ENCODE measurements at regions of chr1 and their contacts with region 1.

Region 1: GRCh38 chr1:85584264-85584781 is 3.8 kb downstream of the CCN1 start:
- DNase-seq: peak; percentile 63
- ATAC-seq: no peak
- H3K4me3 ChIP-seq: no peak overlapping the region
- H3K27ac ChIP-seq: no peak overlapping the region
- H3K4me1 ChIP-seq: peaks cover 52% of the 10 kb centered on the region
- H3K27me3 ChIP-seq: peaks cover 0 to 3% of the 10 kb centered on the region in 2 experiments; a peak in 1 of 5 replicates
- CTCF ChIP-seq: no peak
- EP300 ChIP-seq: no peak; a peak in 1 of 4 replicates
- POLR2A ChIP-seq: peak in 1 of 2 experiments; percentile 83; a peak in 2 of 4 replicates
- RAD21 ChIP-seq: no peak

Region 2: DNA sequence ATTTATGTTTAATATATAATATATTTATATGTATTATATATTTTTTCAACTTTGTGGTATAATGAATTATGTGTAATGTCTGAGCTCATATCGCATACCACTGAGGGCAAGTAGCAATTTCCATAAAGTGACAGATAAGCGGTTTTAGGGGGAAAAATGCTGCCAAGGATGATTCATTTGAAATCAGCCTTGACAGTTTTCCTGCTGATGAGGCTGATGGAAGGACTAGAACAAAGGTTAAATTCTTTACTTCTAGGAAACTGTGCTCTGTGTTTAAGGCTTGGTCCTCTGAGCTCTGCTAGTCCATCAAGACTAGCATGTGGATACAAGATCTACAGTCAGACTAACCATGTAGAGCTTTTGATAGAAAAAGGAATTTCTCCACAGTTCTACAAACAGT is 100.1 kb before region 1 on chr1:
- CTCF ChIA-PET with region 1: no interaction called
- POLR2A ChIA-PET with region 1: no interaction called
- in situ Hi-C with region 1: no loop called
- intact Hi-C with region 1: no loop called
- DNase-seq: no peak
- ATAC-seq: no peak
- H3K4me3 ChIP-seq: no peak overlapping the region
- H3K27ac ChIP-seq: no peak overlapping the region
- H3K4me1 ChIP-seq: no peaks in the 10 kb centered on the region
- H3K27me3 ChIP-seq: no peaks in the 10 kb centered on the region
- CTCF ChIP-seq: no peak
- EP300 ChIP-seq: no peak
- POLR2A ChIP-seq: no peak
- RAD21 ChIP-seq: no peak

Region 3: GRCh38 chr1:85628791-85629531 is 44.6 kb after region 1 on chr1:
- CTCF ChIA-PET with region 1: no interaction called
- POLR2A ChIA-PET with region 1: interaction called, 29 read pairs
- in situ Hi-C with region 1: no loop called
- intact Hi-C with region 1: loop called (anchors 1 kb)
- DNase-seq: peak; percentile 82
- ATAC-seq: peak; percentile 96
- H3K4me3 ChIP-seq: peak overlapping the region; percentile 48 to 62 (median 56)
- H3K27ac ChIP-seq: peak overlapping the region; percentile 91
- H3K4me1 ChIP-seq: peaks cover 41% of the 10 kb centered on the region
- H3K27me3 ChIP-seq: no peaks in the 10 kb centered on the region
- CTCF ChIP-seq: no peak
- EP300 ChIP-seq: 0 out of 4 replicates have a peak, but pooled peaks of 1 of the 2 experiments have one; percentile 10
- POLR2A ChIP-seq: peak; percentile 15 to 50; a peak in 2 of 4 replicates
- RAD21 ChIP-seq: no peak

Measured in HepG2 (cell line).